ENCODE measurements at regions of chr15 and their contacts with region 1.

Region 1: GRCh38 chr15:31396881-31397560 is 70.4 kb downstream of the KLF13 start:
- DNase-seq: peak; percentile 94

Region 2: DNA sequence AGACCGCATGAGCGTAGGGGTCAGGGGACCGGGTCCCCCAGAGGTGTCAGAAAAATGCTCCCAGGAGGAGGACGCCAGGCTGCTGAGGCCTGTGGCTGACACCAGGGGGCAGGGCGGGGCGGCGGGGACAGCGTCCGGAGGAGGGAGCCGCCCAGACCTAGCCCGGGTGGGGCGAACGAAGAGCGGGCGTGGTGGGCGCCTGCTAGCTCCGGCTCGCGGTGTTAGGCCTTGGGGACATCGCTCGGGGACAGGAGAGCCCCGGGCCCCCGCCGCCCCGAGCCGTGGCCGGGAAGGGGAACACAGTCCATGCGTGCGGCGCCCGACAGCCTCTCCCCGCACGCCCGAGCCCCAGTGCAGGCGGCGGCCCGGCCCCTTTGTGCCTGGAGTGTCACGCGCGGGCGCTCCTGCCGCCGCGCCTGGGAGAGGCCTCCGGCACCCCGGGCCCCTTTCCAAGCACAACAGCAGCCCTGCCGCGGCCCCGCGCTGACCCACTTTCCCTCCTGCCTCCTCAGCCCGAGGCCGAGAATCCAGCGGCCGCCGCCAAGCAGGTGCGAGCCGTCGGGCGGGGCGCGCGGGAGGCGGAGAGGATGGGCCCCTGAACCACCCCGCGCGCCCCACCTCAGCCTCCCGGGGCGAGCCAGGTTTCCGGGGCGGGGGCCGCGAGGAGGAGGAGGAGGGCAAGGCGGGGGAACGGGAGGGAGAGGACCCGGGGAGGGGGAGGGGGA is 181.4 kb before region 1 on chr15:
- intact Hi-C with region 1: loop called (anchors 2 kb)
- DNase-seq: peak; percentile 95

Measured in cardiac septum (tissue), 1 donor.